MCF 10A (cell line): ENCODE measurements at regions of chr3 and their contacts with region 1.

Region 1: DNA sequence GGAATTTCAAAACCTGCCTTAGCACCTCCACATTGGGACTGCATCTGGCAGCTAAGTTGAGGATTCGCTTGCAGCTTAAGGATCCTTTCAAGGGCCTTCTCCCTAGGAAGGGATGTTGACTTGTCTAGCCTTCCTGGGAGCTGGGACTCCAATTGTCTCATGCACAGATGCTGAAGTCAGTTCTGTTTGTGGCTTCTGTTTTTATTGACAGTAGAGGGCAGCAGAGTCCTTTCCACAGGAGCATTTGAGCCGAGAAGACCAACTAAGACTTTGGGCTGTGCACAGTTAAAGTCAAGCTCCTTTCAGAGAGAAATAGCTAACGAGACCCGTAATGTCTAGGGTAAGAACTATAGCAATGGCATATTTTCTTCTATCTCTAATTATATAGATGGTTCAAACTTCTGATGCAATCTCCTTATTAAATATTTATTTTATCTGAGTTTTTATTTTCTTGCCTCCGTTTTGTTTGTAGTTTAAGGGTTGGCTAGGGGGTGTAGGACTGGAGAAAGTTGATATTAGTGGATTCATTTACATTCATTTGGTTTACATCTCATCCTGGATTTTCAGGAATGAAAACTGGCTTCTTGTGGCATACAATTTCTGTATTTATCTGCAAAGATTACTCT is 59.7 kb upstream of the KBTBD8 start:
- DNase-seq: peak; percentile 69
- H3K4me3 Mint-ChIP-seq: no peak overlapping the region
- H3K27ac Mint-ChIP-seq: no peak overlapping the region
- H3K4me1 Mint-ChIP-seq: no peaks in the 10 kb centered on the region
- H3K27me3 Mint-ChIP-seq: peaks cover 94% of the 10 kb centered on the region
- CTCF ChIP-seq: peak; percentile 70

Region 2: GRCh38 chr3:66928252-66928651 is 10.2 kb before region 1 on chr3:
- CTCF ChIA-PET with region 1: interaction called, 25 read pairs
- POLR2A ChIA-PET with region 1: interaction called, 3 read pairs
- intact Hi-C with region 1: no loop called
- DNase-seq: no peak
- H3K4me3 Mint-ChIP-seq: no peak overlapping the region
- H3K27ac Mint-ChIP-seq: no peak overlapping the region
- H3K4me1 Mint-ChIP-seq: peaks cover 10% of the 10 kb centered on the region
- H3K27me3 Mint-ChIP-seq: peaks cover 93% of the 10 kb centered on the region
- CTCF ChIP-seq: no peak

Region 3: DNA sequence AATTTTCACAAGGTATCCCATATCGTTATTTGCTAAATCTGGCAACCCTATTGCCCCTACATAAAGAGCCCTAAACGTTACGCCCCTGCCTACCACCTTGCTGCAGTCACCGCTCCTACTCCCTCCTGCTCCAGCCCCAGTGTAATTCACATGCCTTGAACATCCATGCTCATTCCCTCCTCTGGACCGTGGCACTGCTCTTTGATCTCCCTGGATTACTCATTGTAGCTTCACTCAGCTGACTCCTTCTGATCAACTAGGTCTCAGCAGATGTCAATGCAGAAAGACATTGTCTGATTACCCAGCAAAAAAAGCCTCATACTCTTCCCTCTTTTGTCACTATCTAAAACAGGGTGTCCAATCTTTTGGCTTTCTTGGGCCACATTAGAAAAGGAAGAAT is 18.9 kb after region 1 on chr3:
- CTCF ChIA-PET with region 1: interaction called, 16 read pairs
- POLR2A ChIA-PET with region 1: no interaction called
- intact Hi-C with region 1: no loop called
- DNase-seq: no peak
- H3K4me3 Mint-ChIP-seq: no peak overlapping the region
- H3K27ac Mint-ChIP-seq: no peak overlapping the region
- H3K4me1 Mint-ChIP-seq: no peaks in the 10 kb centered on the region
- H3K27me3 Mint-ChIP-seq: peaks cover 86% of the 10 kb centered on the region
- CTCF ChIP-seq: no peak

Region 4: GRCh38 chr3:66962664-66963063 is 24.2 kb after region 1 on chr3:
- CTCF ChIA-PET with region 1: interaction called, 13 read pairs
- POLR2A ChIA-PET with region 1: no interaction called
- intact Hi-C with region 1: no loop called
- DNase-seq: no peak
- H3K4me3 Mint-ChIP-seq: no peak overlapping the region
- H3K27ac Mint-ChIP-seq: no peak overlapping the region
- H3K4me1 Mint-ChIP-seq: no peaks in the 10 kb centered on the region
- H3K27me3 Mint-ChIP-seq: peaks cover 90% of the 10 kb centered on the region
- CTCF ChIP-seq: no peak

Region 5: DNA sequence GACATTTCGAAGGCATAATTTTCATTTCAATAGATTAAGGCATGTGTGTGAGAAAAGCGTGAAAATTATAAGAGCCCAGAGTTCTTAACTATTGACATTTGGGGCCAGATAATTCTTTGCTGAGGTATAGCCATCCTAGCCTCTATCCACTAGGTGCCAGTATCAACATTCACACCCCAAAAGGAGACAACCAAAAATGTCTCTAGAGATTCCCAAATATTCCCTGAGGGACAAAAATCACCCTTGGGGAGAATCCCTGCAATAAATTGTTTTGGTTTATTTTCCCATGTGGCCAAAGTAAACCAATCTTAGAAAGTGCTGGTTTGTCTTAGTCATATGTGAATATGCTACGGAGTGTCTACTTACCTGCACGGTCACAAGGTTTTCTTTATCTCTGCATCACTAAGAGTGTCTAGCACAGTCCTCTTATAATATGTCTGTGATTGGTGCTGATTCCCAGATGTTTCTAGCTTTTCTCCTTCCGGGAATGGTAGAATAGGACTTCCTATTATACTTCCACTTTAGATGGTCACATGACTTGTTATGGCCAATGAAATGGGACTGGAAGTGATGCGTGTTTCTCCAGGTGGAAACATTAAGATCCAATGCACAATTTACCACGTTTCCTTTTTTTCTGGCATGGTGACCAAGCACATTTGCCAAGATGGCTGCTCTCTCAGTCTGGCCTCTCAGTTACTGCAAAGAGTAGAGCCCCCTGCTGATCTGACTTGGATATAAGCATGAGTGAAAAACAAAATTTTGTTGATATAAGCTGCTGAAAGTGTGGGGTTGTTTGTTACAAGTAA is 51.6 kb after region 1 on chr3:
- CTCF ChIA-PET with region 1: interaction called, 11 read pairs
- POLR2A ChIA-PET with region 1: no interaction called
- intact Hi-C with region 1: no loop called
- DNase-seq: peak; percentile 22
- H3K4me3 Mint-ChIP-seq: no peak overlapping the region
- H3K27ac Mint-ChIP-seq: no peak overlapping the region
- H3K4me1 Mint-ChIP-seq: no peaks in the 10 kb centered on the region
- H3K27me3 Mint-ChIP-seq: peaks cover 26% of the 10 kb centered on the region
- CTCF ChIP-seq: peak; percentile 13

Region 6: GRCh38 chr3:67037615-67038014 is 99.2 kb after region 1 on chr3:
- CTCF ChIA-PET with region 1: interaction called, 18 read pairs
- POLR2A ChIA-PET with region 1: no interaction called
- intact Hi-C with region 1: no loop called
- DNase-seq: no peak
- H3K4me3 Mint-ChIP-seq: no peak overlapping the region
- H3K27ac Mint-ChIP-seq: no peak overlapping the region
- H3K4me1 Mint-ChIP-seq: no peaks in the 10 kb centered on the region
- H3K27me3 Mint-ChIP-seq: peaks cover 24% of the 10 kb centered on the region
- CTCF ChIP-seq: peak; percentile 11